ENCODE measurements at regions of chr17 and their contacts with region 1.

Region 1: GRCh38 chr17:45973099-45973780 is 25.8 kb upstream of the STH start:
- DNase-seq: no peak
- ATAC-seq: no peak
- H3K4me3 Mint-ChIP-seq: no peak overlapping the region
- H3K27ac Mint-ChIP-seq: no peak overlapping the region
- H3K4me1 Mint-ChIP-seq: no peaks in the 10 kb centered on the region
- H3K27me3 Mint-ChIP-seq: 0 out of 2 replicates have a peak, but pooled peaks cover 5% of the 10 kb centered on the region
- CTCF ChIP-seq: no peak

Region 2: DNA sequence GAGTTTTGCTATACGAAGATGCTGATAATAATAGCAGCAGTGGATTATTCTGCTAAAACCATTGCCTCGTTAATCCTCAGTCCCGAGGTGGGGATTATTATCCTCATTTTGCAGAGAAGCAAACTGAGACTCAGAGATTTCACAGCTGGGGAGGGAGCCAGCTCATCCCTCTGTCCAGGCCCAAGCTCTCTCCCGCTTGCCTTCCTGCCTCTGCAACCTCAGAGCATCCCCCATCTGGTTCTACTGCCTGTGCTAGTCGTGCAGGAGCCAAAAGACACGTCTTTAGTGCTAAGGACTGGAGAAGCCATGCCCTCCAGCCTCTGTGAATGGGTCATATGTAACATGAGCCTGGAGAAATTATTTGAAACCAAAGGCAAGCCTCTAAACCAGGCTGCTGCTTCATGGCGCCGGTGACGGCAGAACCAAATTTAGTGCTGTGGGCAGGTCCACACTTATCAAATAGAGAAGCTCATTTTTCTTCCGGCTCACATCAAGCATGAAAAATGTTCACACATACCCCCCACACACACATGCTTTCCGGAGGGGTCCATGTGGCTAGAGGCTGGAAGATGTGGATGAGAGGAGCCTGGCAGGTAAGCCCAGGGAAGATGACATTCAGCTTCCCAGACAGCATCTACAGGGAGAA is 65.4 kb before region 1 on chr17:
- CTCF ChIA-PET with region 1: interaction called, 19 read pairs
- POLR2A ChIA-PET with region 1: no interaction called
- DNase-seq: no peak
- ATAC-seq: no peak
- H3K4me3 Mint-ChIP-seq: no peak overlapping the region
- H3K27ac Mint-ChIP-seq: no peak overlapping the region
- H3K4me1 Mint-ChIP-seq: peaks cover 14% of the 10 kb centered on the region
- H3K27me3 Mint-ChIP-seq: peaks cover 6% of the 10 kb centered on the region
- CTCF ChIP-seq: no peak

Region 3: DNA sequence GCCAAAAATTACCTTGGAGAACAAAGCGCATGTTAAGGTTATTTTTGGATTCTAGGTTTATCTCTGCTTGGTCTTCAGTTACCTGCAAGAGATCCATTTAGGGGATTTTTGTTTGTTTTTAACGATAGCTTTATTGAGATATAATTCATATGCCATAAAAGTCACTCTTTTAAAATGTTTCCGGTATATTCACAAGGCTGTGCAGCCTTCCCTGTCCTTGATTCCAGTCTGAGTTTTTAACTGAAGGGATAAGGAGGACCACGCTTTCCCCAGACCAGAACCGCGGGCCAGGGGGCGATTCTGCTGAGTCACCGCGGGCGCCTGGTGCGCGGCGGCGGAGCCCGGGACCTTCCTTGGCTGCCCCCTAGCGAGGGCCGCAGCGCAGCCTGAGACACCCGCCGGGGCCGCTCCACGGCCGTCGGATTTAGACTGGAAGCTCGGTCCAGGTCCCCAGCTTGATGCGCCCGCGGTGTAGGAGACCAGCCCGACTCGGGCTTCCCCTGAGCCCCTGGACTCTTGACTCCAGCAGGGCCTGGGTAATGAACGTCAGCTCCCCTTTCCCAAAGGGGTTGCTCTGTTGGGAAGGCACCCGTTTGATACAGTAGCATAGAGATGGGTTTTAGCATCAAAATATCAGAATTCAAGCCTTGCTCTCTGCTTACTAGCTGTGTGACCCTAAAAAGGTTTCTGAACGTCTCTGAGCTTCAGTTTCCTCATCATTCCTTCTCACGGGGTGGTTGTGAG is 24.2 kb before region 1 on chr17:
- CTCF ChIA-PET with region 1: interaction called, 36 read pairs
- POLR2A ChIA-PET with region 1: no interaction called
- DNase-seq: peak; percentile 83
- ATAC-seq: peak; percentile 95
- H3K4me3 Mint-ChIP-seq: peak overlapping the region; percentile 38
- H3K27ac Mint-ChIP-seq: no peak overlapping the region
- H3K4me1 Mint-ChIP-seq: peaks cover 15% of the 10 kb centered on the region
- H3K27me3 Mint-ChIP-seq: peaks cover 20% of the 10 kb centered on the region
- CTCF ChIP-seq: no peak

Region 4: DNA sequence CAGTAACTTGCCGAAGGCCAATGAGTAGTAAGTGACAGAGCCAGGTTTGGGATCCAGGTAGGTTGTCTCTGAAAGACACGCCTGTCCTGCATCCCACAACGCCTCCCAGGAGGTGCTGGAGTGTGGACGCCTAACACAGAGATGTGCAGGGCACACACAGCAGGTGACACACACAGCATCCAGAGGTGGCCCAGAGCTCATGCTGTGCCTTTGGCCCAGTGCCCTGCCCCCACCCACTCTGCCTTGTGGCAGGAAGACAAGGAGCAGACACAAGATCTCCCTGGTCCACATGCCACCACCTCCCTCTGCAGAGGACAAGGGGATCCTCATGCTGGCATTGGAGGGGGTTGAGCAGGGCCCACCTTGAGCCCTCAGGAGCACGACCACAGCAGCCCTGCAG is 11.1 kb after region 1 on chr17:
- CTCF ChIA-PET with region 1: interaction called, 35 read pairs
- POLR2A ChIA-PET with region 1: no interaction called
- DNase-seq: no peak
- ATAC-seq: no peak
- H3K4me3 Mint-ChIP-seq: no peak overlapping the region
- H3K27ac Mint-ChIP-seq: no peak overlapping the region
- H3K4me1 Mint-ChIP-seq: 0 out of 2 replicates have a peak, but pooled peaks cover 3% of the 10 kb centered on the region
- H3K27me3 Mint-ChIP-seq: no peaks in the 10 kb centered on the region
- CTCF ChIP-seq: no peak

Region 5: GRCh38 chr17:46002311-46002972 is 29.2 kb after region 1 on chr17:
- CTCF ChIA-PET with region 1: interaction called, 20 read pairs
- POLR2A ChIA-PET with region 1: no interaction called
- DNase-seq: peak; percentile 82
- ATAC-seq: peak; percentile 94
- H3K4me3 Mint-ChIP-seq: no peak overlapping the region
- H3K27ac Mint-ChIP-seq: no peak overlapping the region
- H3K4me1 Mint-ChIP-seq: no peaks in the 10 kb centered on the region
- H3K27me3 Mint-ChIP-seq: no peaks in the 10 kb centered on the region; the same call in 1 of the 2 replicates
- CTCF ChIP-seq: peak; percentile 98

Measured in WTC11 (cell line).